Caco-2 (cell line): ENCODE measurements at regions of chr16 and their contacts with region 1.

Region 1: GRCh38 chr16:56860226-56861020 is 4.6 kb upstream of the SLC12A3 start:
- DNase-seq: peak; percentile 60 to 68
- H3K4me3 ChIP-seq: no peak overlapping the region
- H3K4me3 Mint-ChIP-seq: peak overlapping the region; percentile 39
- H3K27ac Mint-ChIP-seq: peak overlapping the region; percentile 93
- H3K4me1 ChIP-seq: peaks cover 87% of the 10 kb centered on the region
- H3K4me1 Mint-ChIP-seq: peaks cover 86% of the 10 kb centered on the region
- H3K27me3 ChIP-seq: no peaks in the 10 kb centered on the region
- H3K27me3 Mint-ChIP-seq: no peaks in the 10 kb centered on the region
- CTCF ChIP-seq: no peak

Region 2: DNA sequence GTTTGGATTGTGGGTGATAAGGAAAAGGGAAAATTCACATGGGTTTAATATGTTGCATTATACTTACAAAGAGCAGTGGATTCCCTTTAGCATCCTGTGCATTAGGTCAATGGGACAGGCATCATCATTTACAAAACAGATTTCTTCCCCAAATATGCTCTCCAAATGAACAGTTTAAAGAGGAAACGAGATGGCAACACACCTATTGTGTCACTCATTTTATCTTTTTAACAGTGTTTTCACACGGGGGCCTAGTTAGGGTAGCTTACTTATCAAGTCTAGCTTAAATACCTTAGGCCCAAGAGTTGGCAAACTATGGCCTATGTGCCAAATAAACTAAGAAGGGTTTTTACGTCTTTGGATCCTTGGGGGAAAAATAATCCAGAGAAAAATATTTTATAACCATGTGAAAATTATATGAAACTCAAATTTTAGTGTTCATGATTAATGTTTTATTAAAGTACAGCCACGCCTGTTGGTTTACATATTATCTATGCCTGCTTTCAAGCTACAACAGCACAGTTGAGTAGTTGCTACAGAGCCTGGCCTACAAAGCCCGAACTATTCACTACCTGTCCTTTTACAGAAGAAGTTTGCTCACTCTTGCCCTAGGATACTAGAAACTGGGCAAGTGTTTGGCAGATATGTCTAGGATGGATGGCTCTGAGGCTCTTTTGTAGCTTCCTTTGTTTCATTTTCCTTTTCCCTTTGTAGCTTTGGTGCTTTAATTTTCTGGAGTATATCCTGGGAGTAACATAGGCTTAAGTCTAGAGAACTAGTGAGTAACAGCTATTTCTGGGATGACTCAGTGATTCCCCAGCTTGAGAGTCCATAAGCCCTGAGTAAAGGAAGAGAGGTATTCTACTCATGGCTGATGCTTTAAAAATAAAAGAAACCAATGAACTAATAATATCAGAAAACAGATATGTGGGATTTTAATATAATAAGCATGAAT is 118.1 kb before region 1 on chr16:
- CTCF ChIA-PET with region 1: no interaction called
- POLR2A ChIA-PET with region 1: no interaction called
- intact Hi-C with region 1: loop called (anchors 5 kb)
- DNase-seq: peak in 1 of 2 experiments; percentile 50
- H3K4me3 ChIP-seq: no peak overlapping the region
- H3K4me3 Mint-ChIP-seq: no peak overlapping the region
- H3K27ac Mint-ChIP-seq: peak overlapping the region; percentile 29
- H3K4me1 ChIP-seq: peaks cover 49% of the 10 kb centered on the region
- H3K4me1 Mint-ChIP-seq: peaks cover 41% of the 10 kb centered on the region
- H3K27me3 ChIP-seq: no peaks in the 10 kb centered on the region
- H3K27me3 Mint-ChIP-seq: no peaks in the 10 kb centered on the region
- CTCF ChIP-seq: no peak

Region 3: GRCh38 chr16:56812884-56813283 is 47.5 kb before region 1 on chr16:
- CTCF ChIA-PET with region 1: no interaction called
- POLR2A ChIA-PET with region 1: no interaction called
- intact Hi-C with region 1: no loop called
- DNase-seq: no peak
- H3K4me3 ChIP-seq: no peak overlapping the region
- H3K4me3 Mint-ChIP-seq: no peak overlapping the region
- H3K27ac Mint-ChIP-seq: peak overlapping the region; percentile 58
- H3K4me1 ChIP-seq: peaks cover 71% of the 10 kb centered on the region
- H3K4me1 Mint-ChIP-seq: peaks cover 42% of the 10 kb centered on the region
- H3K27me3 ChIP-seq: no peaks in the 10 kb centered on the region
- H3K27me3 Mint-ChIP-seq: no peaks in the 10 kb centered on the region
- CTCF ChIP-seq: no peak

Region 4: GRCh38 chr16:56824331-56824730 is 36.1 kb before region 1 on chr16:
- CTCF ChIA-PET with region 1: interaction called, 3 read pairs
- POLR2A ChIA-PET with region 1: no interaction called
- intact Hi-C with region 1: loop called (anchors 5 kb)
- DNase-seq: peak; percentile 55 to 66
- H3K4me3 ChIP-seq: no peak overlapping the region
- H3K4me3 Mint-ChIP-seq: no peak overlapping the region
- H3K27ac Mint-ChIP-seq: peak overlapping the region; percentile 9
- H3K4me1 ChIP-seq: no peaks in the 10 kb centered on the region
- H3K4me1 Mint-ChIP-seq: no peaks in the 10 kb centered on the region
- H3K27me3 ChIP-seq: no peaks in the 10 kb centered on the region
- H3K27me3 Mint-ChIP-seq: no peaks in the 10 kb centered on the region
- CTCF ChIP-seq: peak; percentile 64

Region 5: DNA sequence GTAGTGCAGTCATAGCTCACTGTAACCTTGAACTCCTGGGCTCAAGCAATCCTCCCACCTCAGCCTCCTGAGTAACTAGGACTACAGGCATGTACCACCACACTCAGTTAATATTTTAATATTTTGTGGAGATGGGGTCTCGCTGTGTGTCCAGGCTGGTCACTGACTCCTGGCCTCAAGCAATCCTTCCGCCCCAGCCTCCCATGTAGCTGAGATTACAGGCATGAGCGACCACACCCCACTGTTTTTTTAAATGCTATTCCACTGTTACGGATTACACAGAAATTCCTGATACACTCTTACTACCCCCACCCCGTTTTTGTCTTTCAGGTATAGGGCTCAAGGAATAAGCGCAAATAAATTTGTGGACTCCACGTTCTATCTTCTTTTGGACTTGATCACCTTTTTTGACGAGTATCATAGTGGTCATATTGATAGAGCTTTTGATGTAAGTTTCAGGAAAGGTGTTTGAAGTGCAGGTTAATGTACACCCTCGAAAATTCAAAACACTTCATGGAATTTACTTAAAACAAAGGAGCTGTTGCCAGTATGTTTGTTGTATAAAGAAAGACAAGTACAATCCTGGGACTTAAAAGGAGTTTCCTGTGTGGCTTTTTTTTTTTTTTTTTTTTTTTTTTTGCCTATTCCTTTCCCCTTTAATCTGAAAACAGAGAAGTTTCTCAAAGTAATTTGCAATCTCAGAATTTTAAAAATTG is 21.6 kb before region 1 on chr16:
- CTCF ChIA-PET with region 1: interaction called, 3 read pairs
- POLR2A ChIA-PET with region 1: no interaction called
- intact Hi-C with region 1: loop called (anchors 1 kb)
- DNase-seq: peak in 1 of 2 experiments; percentile 32
- H3K4me3 ChIP-seq: no peak overlapping the region
- H3K4me3 Mint-ChIP-seq: peak overlapping the region; percentile 13
- H3K27ac Mint-ChIP-seq: peak overlapping the region; percentile 60
- H3K4me1 ChIP-seq: peaks cover 44% of the 10 kb centered on the region
- H3K4me1 Mint-ChIP-seq: peaks cover 28% of the 10 kb centered on the region
- H3K27me3 ChIP-seq: no peaks in the 10 kb centered on the region
- H3K27me3 Mint-ChIP-seq: no peaks in the 10 kb centered on the region
- CTCF ChIP-seq: no peak

Region 6: GRCh38 chr16:56919099-56919800 is 58.8 kb after region 1 on chr16:
- CTCF ChIA-PET with region 1: interaction called, 3 read pairs
- POLR2A ChIA-PET with region 1: interaction called, 3 read pairs
- intact Hi-C with region 1: loop called (anchors 1 kb)
- DNase-seq: peak; percentile 89 to 92
- H3K4me3 ChIP-seq: no peak overlapping the region
- H3K4me3 Mint-ChIP-seq: peak overlapping the region; percentile 63
- H3K27ac Mint-ChIP-seq: peak overlapping the region; percentile 95
- H3K4me1 ChIP-seq: peaks cover 68% of the 10 kb centered on the region
- H3K4me1 Mint-ChIP-seq: peaks cover 50% of the 10 kb centered on the region
- H3K27me3 ChIP-seq: no peaks in the 10 kb centered on the region
- H3K27me3 Mint-ChIP-seq: no peaks in the 10 kb centered on the region
- CTCF ChIP-seq: no peak